K562 (cell line): ENCODE measurements at regions of chr11 and their contacts with region 1.

Region 1: GRCh38 chr11:60831143-60831500 is 10.8 kb upstream of the CCDC86 start:
- DNase-seq: peak; percentile 76 to 85 (median 76)
- ATAC-seq: peak; percentile 96
- H3K4me3 ChIP-seq: no peak overlapping the region
- H3K27ac ChIP-seq: no peak overlapping the region
- H3K4me1 ChIP-seq: peaks cover 0 to 2% of the 10 kb centered on the region in 2 experiments; a peak in 2 of 5 replicates
- H3K27me3 ChIP-seq: peaks cover 10 to 38% of the 10 kb centered on the region in 2 experiments; a peak in 4 of 5 replicates
- CTCF ChIP-seq: peak; percentile 91 to 95 (median 94)
- EP300 ChIP-seq: no peak
- POLR2A ChIP-seq: no peak
- RAD21 ChIP-seq: peak; percentile 97 to 99

Region 2: DNA sequence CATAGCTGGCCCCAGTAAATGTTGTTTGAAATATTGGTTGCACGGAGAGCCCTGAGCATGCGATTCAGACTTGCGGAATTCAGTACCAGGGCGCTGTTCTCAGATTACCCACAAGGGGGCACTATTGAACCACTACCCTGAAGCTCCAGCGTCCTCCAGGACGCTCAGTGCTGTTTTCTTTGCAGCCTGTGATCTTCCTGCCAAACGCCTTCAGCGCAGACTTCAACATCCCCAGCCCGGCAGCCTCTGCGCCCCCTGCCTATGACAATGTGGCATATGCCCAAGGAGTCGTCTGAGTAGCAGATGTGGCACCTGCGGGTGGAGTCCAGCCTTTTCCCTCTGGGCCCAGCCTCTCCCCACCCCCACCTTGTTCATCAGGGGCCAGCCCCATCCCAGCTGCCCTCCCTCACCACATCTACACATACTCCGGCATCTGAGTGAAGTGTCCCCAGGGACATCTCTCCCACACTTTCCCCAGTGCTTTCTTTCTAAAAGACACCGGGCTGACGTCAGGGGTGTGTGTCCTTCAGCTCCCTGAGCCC is 55.6 kb before region 1 on chr11:
- CTCF ChIA-PET with region 1: no interaction called
- POLR2A ChIA-PET with region 1: no interaction called
- in situ Hi-C with region 1: no loop called
- intact Hi-C with region 1: loop called (anchors 2 kb)
- DNase-seq: peak; percentile 75 to 86 (median 78)
- ATAC-seq: peak; percentile 95
- H3K4me3 ChIP-seq: no peak overlapping the region
- H3K27ac ChIP-seq: no peak overlapping the region
- H3K4me1 ChIP-seq: peaks cover 0 to 10% of the 10 kb centered on the region in 2 experiments; a peak in 1 of 5 replicates
- H3K27me3 ChIP-seq: peaks cover 15 to 40% of the 10 kb centered on the region in 2 experiments; a peak in 4 of 5 replicates
- CTCF ChIP-seq: peak; percentile 87 to 94 (median 90)
- EP300 ChIP-seq: no peak
- POLR2A ChIP-seq: no peak
- RAD21 ChIP-seq: peak; percentile 83 to 86

Region 3: DNA sequence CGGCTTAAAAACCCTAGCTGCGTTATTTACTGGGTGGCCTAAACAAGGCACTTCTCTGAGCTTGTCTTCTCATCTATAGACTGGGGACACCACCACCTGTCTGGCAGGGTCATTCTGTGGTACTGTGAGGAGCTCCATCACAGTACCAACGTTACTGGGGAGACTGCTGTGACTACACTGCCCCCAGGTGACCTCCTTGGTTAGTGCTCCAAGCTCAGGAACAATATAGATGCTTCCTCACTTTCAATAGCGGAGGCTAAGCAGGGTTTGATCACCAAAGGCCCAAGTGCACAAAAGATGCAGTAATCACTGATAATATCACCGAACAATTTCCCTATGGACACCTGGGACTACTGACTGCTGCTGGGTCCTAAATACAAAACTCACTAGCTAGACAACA is 56.4 kb after region 1 on chr11:
- CTCF ChIA-PET with region 1: interaction called, 59 read pairs
- POLR2A ChIA-PET with region 1: interaction called, 5 read pairs
- in situ Hi-C with region 1: loop called (anchors 5 kb)
- intact Hi-C with region 1: loop called (anchors 1 kb)
- DNase-seq: peak; percentile 66 to 75 (median 74)
- ATAC-seq: peak; percentile 89
- H3K4me3 ChIP-seq: no peak overlapping the region
- H3K27ac ChIP-seq: no peak overlapping the region
- H3K4me1 ChIP-seq: peaks cover 7 to 30% of the 10 kb centered on the region in 2 experiments
- H3K27me3 ChIP-seq: no peaks in the 10 kb centered on the region
- CTCF ChIP-seq: peak; percentile 85 to 96 (median 91)
- EP300 ChIP-seq: no peak
- POLR2A ChIP-seq: no peak
- RAD21 ChIP-seq: peak; percentile 93 to 98

Region 4: GRCh38 chr11:60899046-60899936 is 68.2 kb after region 1 on chr11:
- CTCF ChIA-PET with region 1: interaction called, 18 read pairs
- POLR2A ChIA-PET with region 1: interaction called, 6 read pairs
- in situ Hi-C with region 1: loop called (anchors 5 kb)
- intact Hi-C with region 1: loop called (anchors 1 kb)
- DNase-seq: peak; percentile 53 to 74 (median 60)
- ATAC-seq: peak; percentile 93
- H3K4me3 ChIP-seq: no peak overlapping the region
- H3K27ac ChIP-seq: peak overlapping the region; percentile 35; the same call in 2 of the 3 replicates
- H3K4me1 ChIP-seq: peaks cover 0 to 4% of the 10 kb centered on the region in 2 experiments; a peak in 1 of 5 replicates
- H3K27me3 ChIP-seq: no peaks in the 10 kb centered on the region
- CTCF ChIP-seq: peak; percentile 82 to 94 (median 94)
- EP300 ChIP-seq: no peak
- POLR2A ChIP-seq: no peak
- RAD21 ChIP-seq: peak; percentile 71 to 83

Region 5: GRCh38 chr11:61129639-61130523 is 298.8 kb after region 1 on chr11:
- CTCF ChIA-PET with region 1: interaction called, 5 read pairs
- POLR2A ChIA-PET with region 1: no interaction called
- in situ Hi-C with region 1: no loop called
- intact Hi-C with region 1: loop called (anchors 5 kb)
- DNase-seq: peak; percentile 91 to 94 (median 94)
- ATAC-seq: peak; percentile 98
- H3K4me3 ChIP-seq: no peak overlapping the region
- H3K27ac ChIP-seq: no peak overlapping the region; the same call in 2 of the 3 replicates
- H3K4me1 ChIP-seq: peaks cover 0 to 20% of the 10 kb centered on the region in 2 experiments; a peak in 2 of 5 replicates
- H3K27me3 ChIP-seq: peaks cover 16 to 23% of the 10 kb centered on the region in 2 experiments
- CTCF ChIP-seq: peak; percentile 100
- EP300 ChIP-seq: peak; percentile 30; the same call in 1 of the 2 replicates
- POLR2A ChIP-seq: no peak; the same call in 1 of the 2 replicates
- RAD21 ChIP-seq: peak; percentile 98 to 99

Region 6: DNA sequence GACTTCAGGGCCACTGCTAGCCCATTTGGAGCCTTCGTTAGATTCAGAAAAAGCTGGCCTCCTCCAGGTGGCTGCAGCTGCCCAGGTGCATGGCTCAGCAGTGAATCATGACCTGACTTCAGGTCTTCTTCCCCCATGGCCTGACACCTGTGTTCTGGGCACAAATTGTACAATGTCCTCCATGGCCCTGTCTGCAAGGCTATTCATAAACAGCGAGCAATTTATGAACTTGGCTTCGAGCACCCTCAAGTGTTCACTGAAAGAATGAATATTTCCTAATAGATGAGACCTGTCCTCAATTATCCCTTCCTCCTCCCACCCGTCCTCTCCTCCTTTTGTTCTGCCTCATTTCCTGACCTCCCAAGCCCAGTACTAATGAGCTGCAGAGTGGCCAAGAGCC is 342.3 kb after region 1 on chr11:
- CTCF ChIA-PET with region 1: interaction called, 9 read pairs
- POLR2A ChIA-PET with region 1: no interaction called
- in situ Hi-C with region 1: loop called (anchors 5 kb)
- intact Hi-C with region 1: loop called (anchors 1 kb)
- DNase-seq: peak in 3 of 4 experiments; percentile 21 to 57 (median 46)
- ATAC-seq: peak; percentile 89
- H3K4me3 ChIP-seq: no peak overlapping the region
- H3K27ac ChIP-seq: no peak overlapping the region
- H3K4me1 ChIP-seq: no peaks in the 10 kb centered on the region; a peak in 1 of 5 replicates
- H3K27me3 ChIP-seq: peaks cover 26 to 45% of the 10 kb centered on the region in 2 experiments
- CTCF ChIP-seq: peak; percentile 64 to 79 (median 75)
- EP300 ChIP-seq: no peak
- POLR2A ChIP-seq: no peak
- RAD21 ChIP-seq: peak; percentile 44 to 83

Region 7: GRCh38 chr11:61187505-61188130 is 356.5 kb after region 1 on chr11:
- CTCF ChIA-PET with region 1: interaction called, 5 read pairs
- POLR2A ChIA-PET with region 1: interaction called, 3 read pairs
- in situ Hi-C with region 1: no loop called
- intact Hi-C with region 1: loop called (anchors 2 kb)
- DNase-seq: peak; percentile 73 to 86 (median 80)
- ATAC-seq: peak; percentile 96
- H3K4me3 ChIP-seq: no peak overlapping the region
- H3K27ac ChIP-seq: no peak overlapping the region
- H3K4me1 ChIP-seq: no peaks in the 10 kb centered on the region; a peak in 1 of 5 replicates
- H3K27me3 ChIP-seq: peaks cover 7 to 9% of the 10 kb centered on the region in 2 experiments; a peak in 3 of 5 replicates
- CTCF ChIP-seq: peak; percentile 92 to 94 (median 94)
- EP300 ChIP-seq: no peak
- POLR2A ChIP-seq: no peak
- RAD21 ChIP-seq: peak; percentile 77 to 88

Region 8: GRCh38 chr11:61567286-61568061 is 736.4 kb after region 1 on chr11:
- CTCF ChIA-PET with region 1: no interaction called
- POLR2A ChIA-PET with region 1: no interaction called
- in situ Hi-C with region 1: no loop called
- intact Hi-C with region 1: no loop called
- DNase-seq: peak; percentile 90 to 95 (median 94)
- ATAC-seq: peak; percentile 98
- H3K4me3 ChIP-seq: no peak overlapping the region
- H3K27ac ChIP-seq: no peak overlapping the region
- H3K4me1 ChIP-seq: peaks cover 0 to 10% of the 10 kb centered on the region in 2 experiments; a peak in 2 of 5 replicates
- H3K27me3 ChIP-seq: peaks cover 0 to 20% of the 10 kb centered on the region in 2 experiments; a peak in 2 of 5 replicates
- CTCF ChIP-seq: peak; percentile 74 to 97 (median 86)
- EP300 ChIP-seq: no peak
- POLR2A ChIP-seq: no peak
- RAD21 ChIP-seq: peak; percentile 34 to 44; a peak in 3 of 4 replicates